ENCODE measurements at regions of chr9 and their contacts with region 1.

Region 1: GRCh38 chr9:114653556-114654159 is 3.9 kb downstream of the TEX53 start:
- DNase-seq: peak; percentile 56 to 88 (median 81)
- ATAC-seq: peak; percentile 99
- H3K4me3 ChIP-seq: no peak overlapping the region
- H3K4me3 Mint-ChIP-seq: no peak overlapping the region
- H3K27ac ChIP-seq: no peak overlapping the region
- H3K27ac Mint-ChIP-seq: peak overlapping the region in 7 of 9 donors; percentile 16 to 81 (median 56)
- H3K4me1 ChIP-seq: peaks cover 0 to 23% of the 10 kb centered on the region in 2 donors
- H3K4me1 Mint-ChIP-seq: peaks cover 11 to 25% (median 21%) of the 10 kb centered on the region in 7 donors
- H3K27me3 ChIP-seq: no peaks in the 10 kb centered on the region
- H3K27me3 Mint-ChIP-seq: no peaks in the 10 kb centered on the region

Region 2: DNA sequence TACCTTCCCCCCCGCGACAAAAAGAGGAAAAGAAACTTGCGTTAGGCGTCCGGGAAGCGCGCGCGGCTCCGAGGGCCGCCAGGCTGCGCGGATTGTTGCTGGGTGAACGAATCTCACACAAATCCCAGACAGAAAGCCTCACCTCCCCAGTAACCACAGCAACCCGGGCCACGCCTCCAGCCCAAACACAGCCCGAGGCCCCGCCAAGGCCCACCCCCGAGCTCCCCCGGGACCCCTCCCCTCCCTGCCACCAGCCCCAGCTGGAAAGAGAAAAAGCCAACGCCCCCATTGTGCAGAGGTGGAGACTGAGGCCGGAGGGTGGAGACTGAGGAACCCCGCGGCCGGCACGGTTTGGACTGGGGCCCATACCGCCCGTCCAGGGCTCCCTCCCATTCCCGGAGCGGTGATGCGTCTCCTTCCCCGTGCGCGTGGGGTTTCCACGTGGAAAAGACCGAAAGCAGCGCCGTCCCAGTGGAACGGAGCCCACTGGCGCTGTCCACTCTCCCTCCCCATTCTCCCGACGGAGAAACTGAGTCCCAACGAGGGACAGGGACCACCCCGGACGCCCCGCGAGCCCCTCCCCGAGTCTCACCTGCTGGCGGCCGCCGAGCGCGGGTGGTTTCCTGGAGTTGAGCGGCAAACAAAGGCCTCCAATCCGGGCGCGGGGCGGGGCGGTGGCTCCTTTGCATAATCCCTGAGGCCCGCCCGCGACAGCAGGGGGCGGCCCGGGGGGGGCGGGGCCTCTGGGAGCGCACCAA is 255.6 kb before region 1 on chr9:
- CTCF ChIA-PET with region 1: interaction called, 14 read pairs
- POLR2A ChIA-PET with region 1: interaction called, 3 read pairs
- intact Hi-C with region 1: no loop called
- DNase-seq: peak; percentile 91 to 96 (median 94)
- ATAC-seq: peak; percentile 94
- H3K4me3 ChIP-seq: peak overlapping the region; percentile 98
- H3K4me3 Mint-ChIP-seq: peak overlapping the region; percentile 86 to 99 (median 96)
- H3K27ac ChIP-seq: peak overlapping the region; percentile 97
- H3K27ac Mint-ChIP-seq: peak overlapping the region; percentile 88 to 99 (median 97)
- H3K4me1 ChIP-seq: peaks cover 26 to 44% of the 10 kb centered on the region in 2 donors
- H3K4me1 Mint-ChIP-seq: peaks cover 40 to 48% (median 46%) of the 10 kb centered on the region in 7 donors
- H3K27me3 ChIP-seq: no peaks in the 10 kb centered on the region
- H3K27me3 Mint-ChIP-seq: no peaks in the 10 kb centered on the region

Region 3: GRCh38 chr9:114434878-114435311 is 218.8 kb before region 1 on chr9:
- CTCF ChIA-PET with region 1: interaction called, 65 read pairs
- POLR2A ChIA-PET with region 1: no interaction called
- intact Hi-C with region 1: loop called (anchors 1 to 10 kb)
- DNase-seq: peak in 4 of 9 donors; percentile 9 to 20 (median 15)
- ATAC-seq: no peak
- H3K4me3 ChIP-seq: no peak overlapping the region
- H3K4me3 Mint-ChIP-seq: no peak overlapping the region
- H3K27ac ChIP-seq: no peak overlapping the region
- H3K27ac Mint-ChIP-seq: no peak overlapping the region
- H3K4me1 ChIP-seq: no peaks in the 10 kb centered on the region
- H3K4me1 Mint-ChIP-seq: peaks cover 0 to 5% (median 4%) of the 10 kb centered on the region in 7 donors
- H3K27me3 ChIP-seq: no peaks in the 10 kb centered on the region
- H3K27me3 Mint-ChIP-seq: peaks cover 0 to 16% (median 0%) of the 10 kb centered on the region in 5 donors

Region 4: DNA sequence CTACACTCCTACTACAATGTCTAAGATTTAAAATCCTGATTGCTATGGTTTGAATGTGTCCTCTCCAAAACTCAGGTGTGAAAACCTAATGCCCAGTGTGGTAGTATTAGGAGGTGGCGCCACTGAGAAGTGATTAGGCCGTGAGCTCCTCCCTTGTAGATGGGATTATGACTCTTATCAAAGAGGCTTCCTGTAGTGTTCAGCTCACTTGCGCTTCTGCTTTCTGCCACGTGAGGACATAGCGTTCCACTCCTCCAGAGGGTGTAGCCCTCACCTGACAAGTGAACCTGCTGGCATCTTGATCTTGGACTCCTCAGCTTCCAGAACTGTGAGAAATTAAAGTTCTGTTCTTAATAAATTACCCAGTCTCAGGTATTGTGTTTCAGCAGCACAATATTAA is 115.4 kb before region 1 on chr9:
- CTCF ChIA-PET with region 1: interaction called, 32 read pairs
- POLR2A ChIA-PET with region 1: interaction called, 4 read pairs
- intact Hi-C with region 1: loop called (anchors 1 kb)
- DNase-seq: peak in 7 of 9 donors; percentile 11 to 43 (median 23)
- ATAC-seq: peak; percentile 92
- H3K4me3 ChIP-seq: no peak overlapping the region
- H3K4me3 Mint-ChIP-seq: no peak overlapping the region
- H3K27ac ChIP-seq: no peak overlapping the region
- H3K27ac Mint-ChIP-seq: peak overlapping the region in 4 of 9 donors; percentile 13 to 67 (median 42)
- H3K4me1 ChIP-seq: no peaks in the 10 kb centered on the region
- H3K4me1 Mint-ChIP-seq: peaks cover 0 to 13% (median 7%) of the 10 kb centered on the region in 7 donors
- H3K27me3 ChIP-seq: no peaks in the 10 kb centered on the region
- H3K27me3 Mint-ChIP-seq: peaks cover 0 to 38% (median 0%) of the 10 kb centered on the region in 5 donors

Region 5: DNA sequence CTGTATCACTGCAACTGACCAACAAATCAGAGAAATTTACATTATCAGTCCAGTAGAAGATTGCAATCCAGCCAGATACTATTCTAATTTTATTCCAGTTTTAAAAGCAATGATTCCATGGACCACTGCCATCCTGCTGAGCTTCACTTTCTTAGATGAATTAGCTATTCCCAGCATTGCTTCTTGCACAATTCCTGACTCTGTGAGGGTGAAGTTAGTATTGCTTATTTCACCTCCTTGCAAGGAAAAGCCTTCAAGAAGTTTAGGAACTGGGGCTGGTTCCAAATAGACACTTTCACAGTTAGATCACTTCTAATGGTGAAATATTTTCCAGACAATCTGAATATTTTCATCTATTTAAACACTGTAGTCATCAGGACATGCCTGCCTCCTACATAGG is 802.9 kb after region 1 on chr9:
- CTCF ChIA-PET with region 1: no interaction called
- POLR2A ChIA-PET with region 1: no interaction called
- intact Hi-C with region 1: no loop called
- DNase-seq: no peak
- ATAC-seq: no peak
- H3K4me3 ChIP-seq: no peak overlapping the region
- H3K4me3 Mint-ChIP-seq: no peak overlapping the region
- H3K27ac ChIP-seq: no peak overlapping the region
- H3K27ac Mint-ChIP-seq: no peak overlapping the region
- H3K4me1 ChIP-seq: no peaks in the 10 kb centered on the region
- H3K4me1 Mint-ChIP-seq: no peaks in the 10 kb centered on the region
- H3K27me3 ChIP-seq: no peaks in the 10 kb centered on the region
- H3K27me3 Mint-ChIP-seq: peaks cover 2 to 32% (median 15%) of the 10 kb centered on the region in 5 donors

Measured in naive thymus-derived CD4-positive, alpha-beta T cell (primary cell).